HepG2 (cell line): ENCODE measurements at regions of chr14 and their contacts with region 1.

Region 1: DNA sequence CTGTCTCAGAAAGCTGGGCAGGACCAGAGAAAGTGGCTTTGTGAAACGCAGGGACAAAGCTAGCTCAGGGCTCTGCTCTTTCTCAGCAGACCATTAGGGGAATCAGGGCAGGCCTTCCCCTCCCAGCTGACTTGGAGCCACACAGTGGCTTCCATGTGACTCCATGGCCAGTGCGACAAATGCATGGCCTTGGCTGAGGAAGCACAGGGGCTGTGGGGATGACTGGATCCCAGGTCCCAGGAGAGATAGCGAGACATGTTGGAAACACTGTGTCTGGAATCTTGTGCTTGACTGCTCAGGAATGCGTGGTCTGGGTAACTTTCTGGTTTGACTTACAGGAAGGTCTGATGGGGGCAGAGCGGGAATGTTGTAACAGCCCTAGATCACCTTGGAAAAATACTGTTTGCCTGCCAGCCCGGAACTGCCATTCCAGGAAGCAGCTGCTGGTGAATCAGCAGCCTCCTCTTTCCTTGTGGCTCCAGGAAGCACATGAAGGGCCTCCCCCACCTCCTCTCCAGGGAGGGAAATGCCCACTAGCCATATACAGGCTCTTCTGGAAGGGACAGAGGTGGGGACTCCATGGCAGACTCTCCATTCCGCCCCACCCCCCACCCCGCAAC is 133.5 kb upstream of the HIF1A start:
- DNase-seq: peak; percentile 94
- ATAC-seq: peak; percentile 77
- H3K4me3 ChIP-seq: peak overlapping the region; percentile 21 to 57 (median 29); a peak in 4 of 6 replicates
- H3K27ac ChIP-seq: peak overlapping the region; percentile 92
- H3K4me1 ChIP-seq: peaks cover 90% of the 10 kb centered on the region
- H3K27me3 ChIP-seq: no peaks in the 10 kb centered on the region
- CTCF ChIP-seq: peak; percentile 65
- EP300 ChIP-seq: peak in 1 of 2 experiments; percentile 92; a peak in 3 of 4 replicates
- POLR2A ChIP-seq: peak; percentile 76 to 78
- RAD21 ChIP-seq: peak; percentile 35; the same call in 1 of the 2 replicates

Region 2: DNA sequence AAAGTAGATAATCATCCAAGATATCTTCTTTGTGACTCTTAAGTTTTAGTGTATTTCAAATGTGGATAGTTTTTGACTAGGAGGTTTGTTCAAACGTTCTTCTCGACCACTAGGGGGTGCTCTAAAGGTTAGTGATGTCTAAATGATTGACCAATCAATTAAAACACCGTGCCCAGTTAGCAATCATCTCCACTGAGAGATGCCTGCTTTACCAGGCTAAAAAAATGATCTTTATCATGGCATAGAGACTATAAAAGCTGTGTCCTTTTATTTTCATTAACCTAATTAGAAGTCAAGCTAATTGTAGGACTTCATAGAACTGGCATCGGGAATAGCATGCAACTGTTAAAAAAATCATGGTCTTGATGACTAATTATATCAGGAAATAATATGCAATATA is 86.5 kb before region 1 on chr14:
- CTCF ChIA-PET with region 1: no interaction called
- POLR2A ChIA-PET with region 1: interaction called, 7 read pairs
- in situ Hi-C with region 1: loop called (anchors 5 kb)
- intact Hi-C with region 1: loop called (anchors 1 kb)
- DNase-seq: peak; percentile 67
- ATAC-seq: peak; percentile 52; the same call in 2 of the 3 replicates
- H3K4me3 ChIP-seq: no peak overlapping the region
- H3K27ac ChIP-seq: no peak overlapping the region
- H3K4me1 ChIP-seq: peaks cover 47% of the 10 kb centered on the region
- H3K27me3 ChIP-seq: no peaks in the 10 kb centered on the region
- CTCF ChIP-seq: peak; percentile 70
- EP300 ChIP-seq: no peak
- POLR2A ChIP-seq: no peak
- RAD21 ChIP-seq: peak; percentile 60

Region 3: GRCh38 chr14:61525293-61526011 is 36.3 kb before region 1 on chr14:
- CTCF ChIA-PET with region 1: no interaction called
- POLR2A ChIA-PET with region 1: interaction called, 24 read pairs
- in situ Hi-C with region 1: no loop called
- intact Hi-C with region 1: no loop called
- DNase-seq: no peak
- ATAC-seq: peak; percentile 6; the same call in 1 of the 3 replicates
- H3K4me3 ChIP-seq: no peak overlapping the region
- H3K27ac ChIP-seq: peak overlapping the region; percentile 4
- H3K4me1 ChIP-seq: peaks cover 64% of the 10 kb centered on the region
- H3K27me3 ChIP-seq: no peaks in the 10 kb centered on the region
- CTCF ChIP-seq: no peak
- EP300 ChIP-seq: no peak
- POLR2A ChIP-seq: no peak
- RAD21 ChIP-seq: no peak

Region 4: DNA sequence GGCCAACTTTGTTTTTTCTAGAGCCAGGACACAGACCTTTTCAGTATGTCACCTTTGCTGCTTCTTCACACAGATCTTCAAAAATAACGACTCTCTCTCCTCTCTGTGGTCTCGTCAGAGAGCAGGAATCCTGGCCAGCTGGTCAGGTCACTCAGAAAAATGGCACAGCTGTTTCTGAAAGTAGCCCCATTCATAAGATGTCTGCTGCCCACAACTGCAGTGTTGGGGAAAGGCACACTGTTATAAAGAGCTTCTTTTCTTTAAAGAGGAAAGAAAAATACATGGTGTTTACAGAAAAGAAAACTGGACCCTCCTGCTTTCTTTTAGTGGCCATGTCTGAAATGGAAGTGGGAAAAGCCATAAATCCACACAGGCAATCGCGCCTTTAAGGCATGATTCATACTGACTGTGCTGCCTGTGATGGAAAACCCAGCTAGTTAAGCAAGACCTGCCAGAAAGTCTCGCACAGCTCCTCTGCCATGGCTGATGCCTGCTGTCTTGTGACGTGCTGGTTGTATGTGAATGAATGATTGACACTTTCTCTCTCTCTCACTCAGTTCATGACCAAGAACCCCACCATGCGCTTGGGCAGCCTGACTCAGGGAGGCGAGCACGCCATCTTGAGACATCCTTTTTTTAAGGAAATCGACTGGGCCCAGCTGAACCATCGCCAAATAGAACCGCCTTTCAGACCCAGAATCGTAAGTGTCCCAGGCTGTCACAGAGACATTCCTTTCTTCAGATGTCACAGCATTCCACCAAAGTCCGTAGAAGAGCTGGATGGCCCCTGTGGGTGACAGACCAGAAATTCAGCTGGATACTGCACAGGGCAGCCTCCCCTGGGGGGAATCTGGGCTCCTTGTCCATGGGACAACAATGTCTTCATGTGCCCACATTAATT is 14.3 kb before region 1 on chr14:
- CTCF ChIA-PET with region 1: no interaction called
- POLR2A ChIA-PET with region 1: interaction called, 49 read pairs
- in situ Hi-C with region 1: no loop called
- intact Hi-C with region 1: no loop called
- DNase-seq: no peak
- ATAC-seq: peak; percentile 36
- H3K4me3 ChIP-seq: no peak overlapping the region
- H3K27ac ChIP-seq: no peak overlapping the region
- H3K4me1 ChIP-seq: peaks cover 82% of the 10 kb centered on the region
- H3K27me3 ChIP-seq: no peaks in the 10 kb centered on the region
- CTCF ChIP-seq: no peak
- EP300 ChIP-seq: no peak
- POLR2A ChIP-seq: no peak
- RAD21 ChIP-seq: no peak

Region 5: DNA sequence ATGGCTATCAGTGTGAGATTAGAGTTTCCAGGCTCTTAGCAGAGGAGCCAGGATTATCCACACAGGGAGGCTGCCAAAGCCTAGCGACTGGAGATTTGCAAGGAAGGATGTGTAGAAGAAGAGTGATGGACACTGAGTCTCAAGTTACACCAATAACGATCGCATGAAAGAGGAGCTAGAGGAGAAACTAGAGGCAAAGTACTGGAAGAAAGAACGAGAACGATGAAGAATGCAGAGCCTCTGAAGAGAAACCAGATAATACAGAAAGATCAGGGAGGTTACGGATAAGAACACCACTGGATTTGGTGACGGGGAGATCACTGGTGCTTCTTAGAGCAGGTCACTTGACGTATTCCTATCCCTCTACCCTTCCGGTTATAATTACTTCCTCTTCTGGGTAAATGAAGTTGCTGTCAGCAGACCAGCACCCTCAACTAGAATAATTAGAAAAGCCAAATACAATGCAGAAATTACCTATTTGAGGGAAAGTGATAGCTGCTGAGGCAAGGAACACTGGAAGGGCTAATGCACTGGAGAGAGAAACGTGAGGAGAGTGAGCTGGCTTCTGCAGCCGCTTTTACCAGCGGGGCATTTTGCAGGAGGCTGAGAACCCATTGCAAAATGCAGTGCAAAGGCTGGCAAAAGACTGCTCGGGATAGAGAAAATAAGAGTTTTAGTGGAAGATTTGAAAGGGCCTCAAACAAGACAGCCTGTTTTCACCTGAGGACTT is 40.4 kb after region 1 on chr14:
- CTCF ChIA-PET with region 1: no interaction called
- POLR2A ChIA-PET with region 1: interaction called, 33 read pairs
- in situ Hi-C with region 1: no loop called
- intact Hi-C with region 1: no loop called
- DNase-seq: no peak
- ATAC-seq: peak; percentile 77
- H3K4me3 ChIP-seq: peak overlapping the region; percentile 14 to 32 (median 28); a peak in 4 of 6 replicates
- H3K27ac ChIP-seq: peak overlapping the region; percentile 80
- H3K4me1 ChIP-seq: peaks cover 59% of the 10 kb centered on the region
- H3K27me3 ChIP-seq: no peaks in the 10 kb centered on the region
- CTCF ChIP-seq: no peak
- EP300 ChIP-seq: no peak
- POLR2A ChIP-seq: no peak
- RAD21 ChIP-seq: no peak

Region 6: GRCh38 chr14:61694830-61695694 is 133.3 kb after region 1 on chr14 and contains the start of gene HIF1A:
- CTCF ChIA-PET with region 1: no interaction called
- POLR2A ChIA-PET with region 1: interaction called, 25 read pairs
- in situ Hi-C with region 1: loop called (anchors 5 kb)
- intact Hi-C with region 1: loop called (anchors 1 kb)
- DNase-seq: peak; percentile 93
- ATAC-seq: peak; percentile 96
- H3K4me3 ChIP-seq: peak within 1 kb of the TSS; percentile 85 to 100 (median 97)
- H3K27ac ChIP-seq: peak within 1 kb of the TSS; percentile 98
- H3K4me1 ChIP-seq: peaks cover 31% of the 10 kb centered on the region
- H3K27me3 ChIP-seq: no peaks in the 10 kb centered on the region; a peak in 1 of 5 replicates
- CTCF ChIP-seq: peak; percentile 36
- EP300 ChIP-seq: peak in 1 of 2 experiments; percentile 37; a peak in 2 of 4 replicates
- POLR2A ChIP-seq: peak; percentile 93 to 97
- RAD21 ChIP-seq: no peak
- total RNA-seq, gene HIF1A: 126 and 211 TPM in 2 replicates

Region 7: GRCh38 chr14:61761959-61762786 is 200.4 kb after region 1 on chr14 and contains the start of gene SNAPC1:
- CTCF ChIA-PET with region 1: no interaction called
- POLR2A ChIA-PET with region 1: interaction called, 22 read pairs
- in situ Hi-C with region 1: no loop called
- intact Hi-C with region 1: no loop called
- DNase-seq: peak; percentile 97
- ATAC-seq: peak; percentile 98
- H3K4me3 ChIP-seq: peak within 1 kb of the TSS; percentile 92 to 99 (median 92)
- H3K27ac ChIP-seq: peak within 1 kb of the TSS; percentile 75
- H3K4me1 ChIP-seq: peaks cover 39% of the 10 kb centered on the region
- H3K27me3 ChIP-seq: no peaks in the 10 kb centered on the region; a peak in 1 of 5 replicates
- CTCF ChIP-seq: no peak
- EP300 ChIP-seq: no peak
- POLR2A ChIP-seq: peak in 1 of 2 experiments; percentile 90; a peak in 2 of 4 replicates
- RAD21 ChIP-seq: no peak
- total RNA-seq, gene SNAPC1: 8.4 and 8.5 TPM in 2 replicates